Activated B cell treated with CpG ODN at 0.5 μM for 24 hours (primary cell): ENCODE measurements at regions of chr17 and their contacts with region 1.

Region 1: DNA sequence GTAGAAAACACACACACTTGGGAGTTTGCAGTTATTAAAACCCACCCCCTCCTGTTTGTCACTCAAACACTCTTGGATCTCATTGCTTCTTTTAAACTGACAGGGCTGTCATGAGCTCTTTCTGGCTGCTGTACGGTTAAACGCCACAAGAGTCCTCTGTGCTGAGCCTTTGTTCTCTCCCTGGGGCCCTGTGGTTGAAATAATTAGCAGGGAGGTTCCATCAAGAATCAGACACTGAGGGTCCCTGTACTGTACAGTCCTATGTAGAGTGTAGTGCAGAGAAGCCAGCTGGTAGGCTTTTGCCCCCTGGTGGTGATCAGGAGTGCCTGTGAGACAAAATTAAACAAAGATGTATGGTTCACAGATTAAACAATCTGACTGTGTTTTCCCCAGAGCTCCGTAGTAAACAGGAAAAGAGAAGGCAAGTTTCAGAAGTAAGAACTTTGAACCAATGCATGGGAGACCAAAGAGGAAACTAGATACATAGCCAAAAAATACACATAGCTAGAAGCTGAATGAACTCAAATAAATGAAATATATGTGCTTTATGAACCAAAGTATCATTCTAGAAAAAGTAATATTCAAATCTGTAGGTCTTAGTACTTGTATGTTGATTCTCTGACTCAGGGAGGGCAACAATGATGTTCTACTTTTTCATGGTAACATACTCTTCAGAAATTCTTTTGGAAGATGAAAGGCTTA is 1.4 kb upstream of the SSH2 start:
- DNase-seq: peak; percentile 44
- ATAC-seq: peak; percentile 77
- H3K4me3 Mint-ChIP-seq: no peak overlapping the region
- H3K27ac Mint-ChIP-seq: no peak overlapping the region
- H3K4me1 Mint-ChIP-seq: peaks cover 33% of the 10 kb centered on the region
- H3K27me3 Mint-ChIP-seq: no peaks in the 10 kb centered on the region
- CTCF ChIP-seq: no peak

Region 2: GRCh38 chr17:29293890-29294579 is 637.3 kb before region 1 on chr17 and contains the start of gene NUFIP2:
- CTCF ChIA-PET with region 1: no interaction called
- POLR2A ChIA-PET with region 1: interaction called, 8 read pairs
- intact Hi-C with region 1: loop called (anchors 5 kb)
- DNase-seq: peak; percentile 95
- ATAC-seq: peak; percentile 83
- H3K4me3 Mint-ChIP-seq: peak within 1 kb of the TSS; percentile 100
- H3K27ac Mint-ChIP-seq: peak within 1 kb of the TSS; percentile 100
- H3K4me1 Mint-ChIP-seq: peaks cover 45% of the 10 kb centered on the region
- H3K27me3 Mint-ChIP-seq: no peaks in the 10 kb centered on the region
- CTCF ChIP-seq: no peak
- total RNA-seq, gene NUFIP2: 61.0 and 61.8 TPM in 2 replicates

Region 3: GRCh38 chr17:29617125-29617480 is 314.3 kb before region 1 on chr17:
- CTCF ChIA-PET with region 1: interaction called, 23 read pairs
- POLR2A ChIA-PET with region 1: interaction called, 18 read pairs
- intact Hi-C with region 1: loop called (anchors 1 kb)
- DNase-seq: peak; percentile 75
- ATAC-seq: peak; percentile 79
- H3K4me3 Mint-ChIP-seq: peak overlapping the region; percentile 83
- H3K27ac Mint-ChIP-seq: peak overlapping the region; percentile 72
- H3K4me1 Mint-ChIP-seq: peaks cover 46% of the 10 kb centered on the region
- H3K27me3 Mint-ChIP-seq: peaks cover 3% of the 10 kb centered on the region
- CTCF ChIP-seq: no peak

Region 4: GRCh38 chr17:29760761-29761696 is 170.4 kb before region 1 on chr17:
- CTCF ChIA-PET with region 1: interaction called, 3 read pairs
- POLR2A ChIA-PET with region 1: interaction called, 16 read pairs
- intact Hi-C with region 1: no loop called
- DNase-seq: peak; percentile 95
- ATAC-seq: peak; percentile 86
- H3K4me3 Mint-ChIP-seq: peak overlapping the region; percentile 93
- H3K27ac Mint-ChIP-seq: peak overlapping the region; percentile 91
- H3K4me1 Mint-ChIP-seq: peaks cover 43% of the 10 kb centered on the region
- H3K27me3 Mint-ChIP-seq: no peaks in the 10 kb centered on the region
- CTCF ChIP-seq: no peak

Region 5: DNA sequence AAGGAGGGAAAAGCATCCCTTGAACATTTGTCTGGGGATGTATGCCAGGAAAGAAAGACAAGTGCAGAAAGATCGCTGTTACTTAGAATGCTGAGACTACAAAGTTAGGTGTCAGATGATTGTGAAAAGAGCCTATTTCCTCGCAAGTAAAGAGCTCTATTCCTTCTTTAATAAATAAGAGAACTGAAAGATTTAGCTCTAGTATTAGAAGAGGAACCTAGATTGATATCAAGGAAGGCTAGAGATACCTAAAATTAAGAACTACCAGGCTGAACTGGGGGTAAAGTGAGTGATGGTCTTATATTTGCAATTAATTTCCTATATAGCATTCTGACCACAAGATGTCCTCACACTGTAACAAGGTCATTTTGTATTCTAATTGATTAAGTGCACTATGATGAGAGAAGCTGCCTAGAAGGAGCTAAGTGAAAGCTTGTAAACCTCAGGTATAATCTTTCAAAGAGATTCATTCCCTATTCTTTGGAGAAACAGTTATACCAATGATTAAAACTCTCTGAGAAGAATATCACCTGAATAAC is 63.7 kb before region 1 on chr17:
- CTCF ChIA-PET with region 1: interaction called, 65 read pairs
- POLR2A ChIA-PET with region 1: interaction called, 20 read pairs
- intact Hi-C with region 1: loop called (anchors 1 kb)
- DNase-seq: no peak
- ATAC-seq: peak; percentile 37
- H3K4me3 Mint-ChIP-seq: no peak overlapping the region
- H3K27ac Mint-ChIP-seq: peak overlapping the region; percentile 3
- H3K4me1 Mint-ChIP-seq: peaks cover 49% of the 10 kb centered on the region
- H3K27me3 Mint-ChIP-seq: no peaks in the 10 kb centered on the region
- CTCF ChIP-seq: no peak

Region 6: GRCh38 chr17:30000001-30000754 is 68.8 kb after region 1 on chr17:
- CTCF ChIA-PET with region 1: no interaction called
- POLR2A ChIA-PET with region 1: no interaction called
- intact Hi-C with region 1: loop called (anchors 1 kb)
- DNase-seq: no peak
- ATAC-seq: no peak
- H3K4me3 Mint-ChIP-seq: no peak overlapping the region
- H3K27ac Mint-ChIP-seq: no peak overlapping the region
- H3K4me1 Mint-ChIP-seq: no peaks in the 10 kb centered on the region
- H3K27me3 Mint-ChIP-seq: no peaks in the 10 kb centered on the region
- CTCF ChIP-seq: no peak

Region 7: GRCh38 chr17:30263552-30264333 is 332.4 kb after region 1 on chr17:
- CTCF ChIA-PET with region 1: no interaction called
- POLR2A ChIA-PET with region 1: no interaction called
- intact Hi-C with region 1: no loop called
- DNase-seq: no peak
- ATAC-seq: no peak
- H3K4me3 Mint-ChIP-seq: no peak overlapping the region
- H3K27ac Mint-ChIP-seq: no peak overlapping the region
- H3K4me1 Mint-ChIP-seq: no peaks in the 10 kb centered on the region
- H3K27me3 Mint-ChIP-seq: no peaks in the 10 kb centered on the region
- CTCF ChIP-seq: no peak